GM23248 (cell line): ENCODE measurements at regions of chr12 and their contacts with region 1.

Region 1: DNA sequence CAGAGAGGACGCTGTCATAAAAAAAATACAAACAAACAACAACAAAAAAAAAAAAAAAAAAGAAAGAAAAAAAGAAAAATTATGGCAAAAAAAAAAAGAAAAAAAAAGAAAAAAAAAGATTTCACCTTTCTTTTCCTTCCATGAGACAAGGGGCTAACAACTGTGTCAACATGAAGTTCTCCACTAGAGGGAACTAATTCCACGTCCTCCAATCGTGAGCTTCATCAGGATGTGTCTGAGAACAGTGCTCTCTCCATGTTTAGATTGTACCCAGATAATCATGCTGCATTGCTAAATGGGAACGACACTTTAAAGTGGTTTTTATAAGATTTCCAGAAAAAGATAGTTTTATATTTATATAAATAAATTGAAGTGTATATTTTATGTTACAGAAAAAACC is 96.2 kb upstream of the PTPRB start:
- DNase-seq: peak; percentile 79
- H3K4me3 ChIP-seq: no peak overlapping the region
- H3K27ac ChIP-seq: no peak overlapping the region
- H3K4me1 ChIP-seq: no peaks in the 10 kb centered on the region
- H3K27me3 ChIP-seq: peaks cover 11% of the 10 kb centered on the region; the same call in 1 of the 2 replicates

Region 2: GRCh38 chr12:70590051-70590450 is 143.3 kb before region 1 on chr12:
- in situ Hi-C with region 1: loop called (anchors 5 kb)
- DNase-seq: peak; percentile 90
- H3K4me3 ChIP-seq: no peak overlapping the region
- H3K27ac ChIP-seq: no peak overlapping the region
- H3K4me1 ChIP-seq: no peaks in the 10 kb centered on the region
- H3K27me3 ChIP-seq: no peaks in the 10 kb centered on the region

Region 3: DNA sequence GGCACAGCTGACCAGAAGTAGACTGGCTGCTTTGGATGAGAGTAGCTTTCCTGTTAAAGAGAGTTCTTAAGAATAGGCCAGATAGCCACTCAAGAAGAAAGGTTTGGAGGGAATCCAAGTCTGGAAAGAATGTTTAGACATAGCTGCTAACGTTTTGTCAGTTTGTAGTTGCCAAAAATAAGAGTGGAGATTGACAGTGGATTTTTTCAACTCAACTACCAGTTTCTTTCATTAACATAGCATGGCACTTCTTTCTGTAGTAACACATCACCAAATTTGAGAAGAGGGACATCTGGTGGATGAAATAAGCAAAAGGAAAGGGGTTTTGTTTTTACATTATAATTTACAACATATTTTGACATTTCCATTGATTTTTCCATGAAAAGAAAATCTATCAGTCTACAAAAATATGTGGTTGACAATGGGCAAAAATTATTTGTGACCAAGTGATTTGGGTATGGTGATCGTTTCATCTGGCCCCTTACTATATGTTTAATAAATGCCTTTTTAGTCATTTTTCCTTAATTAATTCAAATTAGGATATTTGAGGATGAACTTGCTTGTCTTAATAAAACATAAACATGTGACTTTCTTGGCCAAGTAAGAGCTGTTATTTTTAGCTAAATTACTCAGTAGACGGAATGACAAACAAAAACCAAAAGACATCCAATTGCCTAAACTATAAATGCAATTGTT is 116.0 kb after region 1 on chr12:
- in situ Hi-C with region 1: loop called (anchors 10 kb)
- DNase-seq: peak; percentile 60
- H3K4me3 ChIP-seq: no peak overlapping the region
- H3K27ac ChIP-seq: no peak overlapping the region
- H3K4me1 ChIP-seq: peaks cover 17% of the 10 kb centered on the region
- H3K27me3 ChIP-seq: no peaks in the 10 kb centered on the region

Region 4: DNA sequence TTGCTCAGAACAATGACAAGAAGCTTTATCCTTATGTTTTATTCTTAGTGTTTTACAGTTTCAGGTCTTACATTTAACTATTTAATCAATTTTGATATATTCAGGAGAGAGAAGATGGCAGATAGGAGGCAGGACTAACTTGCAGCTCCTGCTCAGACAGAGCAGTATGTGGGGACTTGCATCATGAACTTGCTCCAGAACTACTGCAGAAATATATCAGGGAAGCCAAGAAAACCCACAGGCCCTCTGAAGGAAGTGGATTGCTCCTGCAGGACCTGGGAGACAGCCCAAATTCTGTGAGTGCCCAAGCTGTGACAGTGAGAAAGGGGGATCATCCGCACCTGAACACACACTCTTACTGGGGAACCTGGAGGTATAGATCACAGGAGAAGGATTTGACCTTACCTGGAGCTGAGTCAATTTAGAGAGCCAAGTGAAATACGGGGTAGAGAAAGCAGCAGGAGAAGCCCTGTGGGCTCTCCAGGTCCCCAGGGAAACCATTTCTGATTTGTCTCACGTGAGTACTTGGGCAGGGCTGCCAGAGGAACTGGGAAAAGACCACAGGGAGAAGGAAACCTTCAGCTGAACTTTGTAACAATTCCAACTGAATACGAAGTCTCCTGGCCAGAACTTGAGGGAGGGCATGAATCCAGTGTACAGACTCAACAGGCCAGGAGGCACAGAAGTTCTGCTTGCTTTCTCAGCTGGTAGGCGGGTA is 453.3 kb after region 1 on chr12:
- in situ Hi-C with region 1: no loop called
- DNase-seq: no peak
- H3K4me3 ChIP-seq: no peak overlapping the region
- H3K27ac ChIP-seq: no peak overlapping the region
- H3K4me1 ChIP-seq: no peaks in the 10 kb centered on the region
- H3K27me3 ChIP-seq: no peaks in the 10 kb centered on the region